ENCODE measurements at regions of chr13 and their contacts with region 1.

Region 1: GRCh38 chr13:77002590-77003190 is 10.8 kb downstream of the CLN5 start:
- DNase-seq: no peak
- H3K4me3 ChIP-seq: no peak overlapping the region
- H3K4me3 Mint-ChIP-seq: no peak overlapping the region
- H3K27ac ChIP-seq: no peak overlapping the region
- H3K27ac Mint-ChIP-seq: peak overlapping the region in 3 of 8 donors; percentile 15 to 37 (median 19)
- H3K4me1 ChIP-seq: no peaks in the 10 kb centered on the region
- H3K4me1 Mint-ChIP-seq: peaks cover 10 to 44% (median 35%) of the 10 kb centered on the region in 3 donors
- H3K27me3 ChIP-seq: no peaks in the 10 kb centered on the region
- H3K27me3 Mint-ChIP-seq: no peaks in the 10 kb centered on the region

Region 2: GRCh38 chr13:76991796-76992547 is 10.7 kb before region 1 on chr13 and contains the start of gene CLN5:
- CTCF ChIA-PET with region 1: interaction called, 20 read pairs
- POLR2A ChIA-PET with region 1: interaction called, 11 read pairs
- DNase-seq: peak; percentile 93 to 97 (median 96)
- H3K4me3 ChIP-seq: peak within 1 kb of the TSS; percentile 91
- H3K4me3 Mint-ChIP-seq: peak within 1 kb of the TSS; percentile 90 to 98 (median 95)
- H3K27ac ChIP-seq: peak within 1 kb of the TSS; percentile 96
- H3K27ac Mint-ChIP-seq: peak within 1 kb of the TSS; percentile 98 to 100 (median 100)
- H3K4me1 ChIP-seq: peaks cover 31% of the 10 kb centered on the region
- H3K4me1 Mint-ChIP-seq: peaks cover 40 to 57% (median 44%) of the 10 kb centered on the region in 3 donors
- H3K27me3 ChIP-seq: peaks cover 14% of the 10 kb centered on the region
- H3K27me3 Mint-ChIP-seq: peaks cover 12 to 15% of the 10 kb centered on the region in 2 donors
- total RNA-seq, gene CLN5: 14.0 to 15.9 TPM

Region 3: DNA sequence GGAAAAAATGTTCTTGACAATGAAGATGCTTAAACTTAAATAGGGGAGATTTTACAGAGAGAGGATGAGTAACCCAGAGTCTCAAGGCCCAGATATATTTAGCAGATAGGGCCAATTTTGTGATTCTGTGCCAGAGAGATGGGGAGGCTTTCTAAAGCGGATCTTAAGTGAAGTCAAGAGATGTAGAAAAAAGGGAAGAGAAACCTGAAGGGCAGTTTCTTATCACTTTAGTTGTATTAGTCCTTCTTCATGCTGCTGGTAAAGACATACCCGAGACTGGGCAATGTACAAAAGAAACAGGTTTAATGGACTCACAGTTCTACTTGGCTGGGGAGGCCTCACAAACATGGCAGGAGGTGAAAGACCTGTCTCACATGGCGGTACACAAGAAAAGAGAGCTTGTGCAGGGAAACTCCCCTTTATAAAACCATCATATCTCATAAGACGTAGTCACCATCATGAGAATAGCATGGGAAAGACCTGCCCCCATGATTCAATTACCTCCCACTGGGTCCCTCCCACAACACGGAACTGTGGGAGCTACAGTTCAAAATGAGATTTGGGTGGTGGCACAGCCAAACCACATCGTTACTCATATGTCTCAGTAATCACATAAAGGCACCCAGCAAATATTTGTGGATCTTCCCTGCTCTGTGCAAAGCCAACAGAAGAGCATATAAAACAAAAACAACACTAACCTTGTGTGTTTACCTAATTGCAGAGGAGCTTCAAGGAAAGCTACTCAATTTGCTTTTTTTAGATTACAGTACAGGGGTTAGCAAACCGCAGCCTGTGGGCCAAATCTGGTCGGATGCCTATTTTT is 426.8 kb after region 1 on chr13:
- CTCF ChIA-PET with region 1: no interaction called
- POLR2A ChIA-PET with region 1: no interaction called
- DNase-seq: no peak
- H3K4me3 ChIP-seq: no peak overlapping the region
- H3K4me3 Mint-ChIP-seq: no peak overlapping the region
- H3K27ac ChIP-seq: no peak overlapping the region
- H3K27ac Mint-ChIP-seq: peak overlapping the region in 1 of 8 donors; percentile 64
- H3K4me1 ChIP-seq: no peaks in the 10 kb centered on the region
- H3K4me1 Mint-ChIP-seq: peaks cover 4 to 12% (median 5%) of the 10 kb centered on the region in 3 donors
- H3K27me3 ChIP-seq: no peaks in the 10 kb centered on the region
- H3K27me3 Mint-ChIP-seq: peaks cover 0 to 4% of the 10 kb centered on the region in 2 donors

Measured in CD8-positive, alpha-beta memory T cell (primary cell).